ENCODE measurements at regions of chr1 and their contacts with region 1.

Region 1: GRCh38 chr1:53691326-53691725 is 47.6 kb downstream of the GLIS1 start:
- DNase-seq: no peak
- H3K4me3 ChIP-seq: no peak overlapping the region
- H3K27ac ChIP-seq: no peak overlapping the region
- H3K4me1 ChIP-seq: peaks cover 0 to 15% (median 7%) of the 10 kb centered on the region in 4 experiments; a peak in 5 of 7 replicates
- H3K27me3 ChIP-seq: peaks cover 0 to under 1% (median 0%) of the 10 kb centered on the region in 4 experiments; a peak in 3 of 7 replicates
- CTCF ChIP-seq: no peak
- EP300 ChIP-seq: no peak
- POLR2A ChIP-seq: no peak
- RAD21 ChIP-seq: no peak

Region 2: DNA sequence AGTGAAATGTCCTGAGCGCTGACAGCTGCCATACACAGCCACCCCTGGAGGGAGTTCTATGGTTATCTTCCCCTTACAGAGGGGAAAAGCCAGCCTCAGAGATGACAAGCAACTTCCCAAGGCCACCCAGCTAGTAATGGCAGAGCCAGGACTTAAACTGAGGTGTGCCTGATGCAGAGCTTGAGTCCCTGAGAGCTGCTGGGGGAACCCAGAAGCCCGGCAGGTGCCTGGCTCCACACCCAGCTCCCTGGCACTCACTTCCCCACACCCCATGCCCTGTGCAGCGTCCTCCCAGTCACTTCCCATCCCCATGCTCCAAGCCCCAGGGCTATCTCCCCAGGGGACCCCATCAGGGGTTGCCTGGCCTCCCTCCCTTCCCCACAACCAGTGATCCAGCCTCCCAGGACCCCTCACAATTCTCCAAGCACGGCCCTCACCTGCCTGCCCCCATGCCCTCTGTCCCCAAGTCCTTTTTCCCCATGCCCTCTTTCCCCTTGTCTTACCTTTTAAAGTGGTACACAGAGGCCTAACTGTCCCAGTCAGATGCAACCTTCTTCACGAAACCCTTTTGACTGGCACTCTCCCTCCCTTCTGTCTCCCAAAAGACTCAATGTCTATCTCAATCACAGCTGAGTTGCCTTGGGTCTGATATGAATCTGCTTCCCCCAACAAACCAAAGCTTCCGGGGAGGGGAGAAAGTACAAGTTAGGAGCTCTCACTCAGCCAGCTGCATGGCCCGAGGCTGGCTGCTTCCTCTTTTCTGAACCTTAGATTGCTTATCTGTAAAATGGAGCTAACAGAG is 323.6 kb before region 1 on chr1:
- CTCF ChIA-PET with region 1: no interaction called
- POLR2A ChIA-PET with region 1: no interaction called
- DNase-seq: peak in 1 of 2 experiments; percentile 37
- H3K4me3 ChIP-seq: no peak overlapping the region
- H3K27ac ChIP-seq: no peak overlapping the region
- H3K4me1 ChIP-seq: peaks cover 0 to 5% (median 0%) of the 10 kb centered on the region in 4 experiments; a peak in 1 of 7 replicates
- H3K27me3 ChIP-seq: no peaks in the 10 kb centered on the region; a peak in 3 of 7 replicates
- CTCF ChIP-seq: no peak
- EP300 ChIP-seq: no peak
- POLR2A ChIP-seq: no peak
- RAD21 ChIP-seq: no peak

Region 3: GRCh38 chr1:53625049-53625448 is 66.3 kb before region 1 on chr1:
- CTCF ChIA-PET with region 1: no interaction called
- POLR2A ChIA-PET with region 1: no interaction called
- DNase-seq: peak in 1 of 2 experiments; percentile 22
- H3K4me3 ChIP-seq: no peak overlapping the region
- H3K27ac ChIP-seq: no peak overlapping the region
- H3K4me1 ChIP-seq: no peaks in the 10 kb centered on the region
- H3K27me3 ChIP-seq: no peaks in the 10 kb centered on the region
- CTCF ChIP-seq: no peak
- EP300 ChIP-seq: no peak
- POLR2A ChIP-seq: no peak
- RAD21 ChIP-seq: no peak

Region 4: DNA sequence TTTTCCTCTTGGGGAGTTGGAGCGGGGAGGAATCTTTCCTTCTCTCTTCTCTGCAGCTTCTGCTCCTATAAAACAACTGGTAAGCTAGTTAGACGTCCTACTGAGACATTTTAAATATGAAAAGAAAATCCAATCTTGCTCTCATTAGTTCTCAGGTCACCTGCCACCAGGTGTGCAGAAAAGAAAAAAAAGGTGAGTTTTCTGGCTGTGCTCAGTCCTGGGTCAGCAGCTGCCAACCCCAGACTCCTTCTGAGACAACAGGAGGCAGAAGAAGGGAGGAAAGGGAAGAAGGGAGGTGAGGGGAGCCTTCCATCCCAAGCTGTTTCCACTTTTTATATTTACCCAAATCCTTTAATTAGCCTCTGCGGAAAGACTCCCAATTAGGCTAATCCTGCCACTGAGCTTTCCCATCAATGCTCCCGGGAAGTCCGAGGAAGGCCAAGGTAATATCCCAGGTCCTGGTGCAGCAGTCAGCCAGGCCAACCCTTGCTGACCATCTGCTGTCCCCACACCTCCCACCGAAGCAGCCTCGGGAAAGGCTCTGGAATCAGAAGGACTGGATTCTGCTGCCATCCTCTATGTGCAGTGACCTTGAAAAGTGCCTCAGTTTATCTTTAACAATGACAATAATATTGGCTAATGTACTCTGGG is 14.2 kb after region 1 on chr1:
- CTCF ChIA-PET with region 1: interaction called, 11 read pairs
- POLR2A ChIA-PET with region 1: interaction called, 3 read pairs
- DNase-seq: no peak
- H3K4me3 ChIP-seq: peak overlapping the region in 2 of 4 experiments; percentile 10 to 26; a peak in 4 of 8 replicates
- H3K27ac ChIP-seq: 0 out of 2 replicates have a peak overlapping the region, but pooled peaks have one; percentile 20
- H3K4me1 ChIP-seq: peaks cover 21 to 34% (median 29%) of the 10 kb centered on the region in 4 experiments
- H3K27me3 ChIP-seq: no peaks in the 10 kb centered on the region
- CTCF ChIP-seq: no peak
- EP300 ChIP-seq: no peak
- POLR2A ChIP-seq: no peak
- RAD21 ChIP-seq: no peak

Region 5: GRCh38 chr1:53781654-53782053 is 90.3 kb after region 1 on chr1:
- CTCF ChIA-PET with region 1: no interaction called
- POLR2A ChIA-PET with region 1: no interaction called
- DNase-seq: no peak
- H3K4me3 ChIP-seq: no peak overlapping the region
- H3K27ac ChIP-seq: no peak overlapping the region
- H3K4me1 ChIP-seq: no peaks in the 10 kb centered on the region
- H3K27me3 ChIP-seq: no peaks in the 10 kb centered on the region
- CTCF ChIP-seq: no peak
- EP300 ChIP-seq: no peak
- POLR2A ChIP-seq: no peak
- RAD21 ChIP-seq: no peak

Region 6: GRCh38 chr1:53807916-53808315 is 116.6 kb after region 1 on chr1:
- CTCF ChIA-PET with region 1: no interaction called
- POLR2A ChIA-PET with region 1: no interaction called
- DNase-seq: no peak
- H3K4me3 ChIP-seq: no peak overlapping the region
- H3K27ac ChIP-seq: no peak overlapping the region
- H3K4me1 ChIP-seq: no peaks in the 10 kb centered on the region; a peak in 1 of 7 replicates
- H3K27me3 ChIP-seq: no peaks in the 10 kb centered on the region
- CTCF ChIP-seq: no peak
- EP300 ChIP-seq: no peak
- POLR2A ChIP-seq: no peak
- RAD21 ChIP-seq: no peak

Measured in H1 (cell line).